Sciatic nerve (tissue), 2 donors: ENCODE measurements at regions of chr9 and their contacts with region 1.

Region 1: GRCh38 chr9:34332076-34332964 is 3.0 kb downstream of the NUDT2 start:
- DNase-seq: no peak
- ATAC-seq: no peak

Region 2: GRCh38 chr9:34178520-34179212 is 153.7 kb before region 1 on chr9 and contains the start of gene UBAP1:
- intact Hi-C with region 1: no loop called
- DNase-seq: peak; percentile 98
- ATAC-seq: peak; percentile 99
- total RNA-seq, gene UBAP1: 56.6 TPM

Region 3: GRCh38 chr9:34376596-34377403 is 44.5 kb after region 1 on chr9 and contains the start of gene MYORG:
- intact Hi-C with region 1: loop called (anchors 2 kb)
- DNase-seq: peak; percentile 94
- ATAC-seq: peak; percentile 88
- total RNA-seq, gene MYORG: 6.6 TPM